Gastrocnemius medialis (tissue), 4 donors: ENCODE measurements at regions of chr10 and their contacts with region 1.

Region 1: DNA sequence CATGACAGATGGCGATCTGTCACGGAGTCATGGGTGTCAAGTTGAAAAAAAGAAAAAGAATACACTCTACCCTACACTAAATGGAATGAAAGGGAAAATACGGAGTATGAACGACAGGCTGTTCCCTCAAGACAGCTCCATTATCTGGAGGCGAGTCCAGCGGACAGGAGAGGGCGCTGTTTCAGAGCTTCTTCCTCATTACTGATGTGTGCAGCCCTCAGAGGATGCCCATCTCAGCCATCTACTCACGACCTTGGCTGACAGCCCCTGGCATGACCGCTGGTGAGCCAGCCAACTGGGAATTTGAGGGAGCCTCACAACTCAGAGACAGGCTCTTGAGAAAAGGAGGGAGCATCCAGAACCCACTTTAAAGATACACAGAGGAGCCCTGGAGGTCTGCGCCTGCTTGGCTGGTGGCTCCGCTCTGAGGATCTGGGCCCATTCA is 49.6 kb upstream of the SMNDC1 start:
- DNase-seq: peak in 1 of 2 donors; percentile 42
- ATAC-seq: peak; percentile 54 to 71
- H3K4me3 ChIP-seq: no peak overlapping the region
- H3K27ac ChIP-seq: no peak overlapping the region
- H3K4me1 ChIP-seq: no peaks in the 10 kb centered on the region
- H3K27me3 ChIP-seq: peaks cover 0 to 6% (median 0%) of the 10 kb centered on the region in 3 donors
- CTCF ChIP-seq: peak in 4 of 5 experiments; percentile 42 to 57 (median 50)
- POLR2A ChIP-seq: no peak

Region 2: GRCh38 chr10:110036640-110037039 is 317.7 kb before region 1 on chr10:
- in situ Hi-C with region 1: no loop called
- intact Hi-C with region 1: no loop called
- DNase-seq: no peak
- ATAC-seq: no peak
- H3K4me3 ChIP-seq: no peak overlapping the region
- H3K27ac ChIP-seq: no peak overlapping the region
- H3K4me1 ChIP-seq: peaks cover 18 to 23% of the 10 kb centered on the region in 2 donors
- H3K27me3 ChIP-seq: no peaks in the 10 kb centered on the region
- CTCF ChIP-seq: no peak
- POLR2A ChIP-seq: no peak

Region 3: GRCh38 chr10:110200503-110200902 is 153.8 kb before region 1 on chr10:
- in situ Hi-C with region 1: no loop called
- intact Hi-C with region 1: no loop called
- DNase-seq: no peak
- ATAC-seq: no peak
- H3K4me3 ChIP-seq: no peak overlapping the region
- H3K27ac ChIP-seq: no peak overlapping the region
- H3K4me1 ChIP-seq: no peaks in the 10 kb centered on the region
- H3K27me3 ChIP-seq: no peaks in the 10 kb centered on the region
- CTCF ChIP-seq: no peak
- POLR2A ChIP-seq: no peak

Region 4: GRCh38 chr10:110456523-110457091 is 102.3 kb after region 1 on chr10:
- in situ Hi-C with region 1: no loop called
- intact Hi-C with region 1: loop called (anchors 10 kb)
- DNase-seq: no peak
- ATAC-seq: no peak
- H3K4me3 ChIP-seq: no peak overlapping the region
- H3K27ac ChIP-seq: no peak overlapping the region
- H3K4me1 ChIP-seq: peaks cover 3 to 5% of the 10 kb centered on the region in 2 donors
- H3K27me3 ChIP-seq: no peaks in the 10 kb centered on the region
- CTCF ChIP-seq: no peak
- POLR2A ChIP-seq: no peak

Region 5: GRCh38 chr10:110497438-110498086 is 143.2 kb after region 1 on chr10 and contains the start of gene DUSP5:
- in situ Hi-C with region 1: no loop called
- intact Hi-C with region 1: loop called (anchors 5 kb)
- DNase-seq: peak; percentile 81 to 87
- ATAC-seq: peak; percentile 92 to 94
- H3K4me3 ChIP-seq: peak within 1 kb of the TSS; percentile 66 to 89 (median 83)
- H3K27ac ChIP-seq: peak within 1 kb of the TSS; percentile 67 to 83 (median 81)
- H3K4me1 ChIP-seq: peaks cover 8 to 18% of the 10 kb centered on the region in 2 donors
- H3K27me3 ChIP-seq: peaks cover 8 to 12% (median 8%) of the 10 kb centered on the region in 3 donors
- CTCF ChIP-seq: peak in 1 of 5 experiments; percentile 8
- POLR2A ChIP-seq: peak; percentile 83 to 96
- total RNA-seq, gene DUSP5: 0.75 to 2.8 (median 2.5) TPM in 3 of 4 donors, not detected in the other

Region 6: GRCh38 chr10:110547139-110547761 is 192.9 kb after region 1 on chr10:
- in situ Hi-C with region 1: no loop called
- intact Hi-C with region 1: loop called (anchors 5 kb)
- DNase-seq: no peak
- ATAC-seq: peak; percentile 52 to 70
- H3K4me3 ChIP-seq: no peak overlapping the region
- H3K27ac ChIP-seq: no peak overlapping the region
- H3K4me1 ChIP-seq: no peaks in the 10 kb centered on the region
- H3K27me3 ChIP-seq: peaks cover 0 to 6% (median 0%) of the 10 kb centered on the region in 3 donors
- CTCF ChIP-seq: peak; percentile 57 to 81 (median 72)
- POLR2A ChIP-seq: no peak